ENCODE measurements at regions of chr2 and their contacts with region 1.

Region 1: DNA sequence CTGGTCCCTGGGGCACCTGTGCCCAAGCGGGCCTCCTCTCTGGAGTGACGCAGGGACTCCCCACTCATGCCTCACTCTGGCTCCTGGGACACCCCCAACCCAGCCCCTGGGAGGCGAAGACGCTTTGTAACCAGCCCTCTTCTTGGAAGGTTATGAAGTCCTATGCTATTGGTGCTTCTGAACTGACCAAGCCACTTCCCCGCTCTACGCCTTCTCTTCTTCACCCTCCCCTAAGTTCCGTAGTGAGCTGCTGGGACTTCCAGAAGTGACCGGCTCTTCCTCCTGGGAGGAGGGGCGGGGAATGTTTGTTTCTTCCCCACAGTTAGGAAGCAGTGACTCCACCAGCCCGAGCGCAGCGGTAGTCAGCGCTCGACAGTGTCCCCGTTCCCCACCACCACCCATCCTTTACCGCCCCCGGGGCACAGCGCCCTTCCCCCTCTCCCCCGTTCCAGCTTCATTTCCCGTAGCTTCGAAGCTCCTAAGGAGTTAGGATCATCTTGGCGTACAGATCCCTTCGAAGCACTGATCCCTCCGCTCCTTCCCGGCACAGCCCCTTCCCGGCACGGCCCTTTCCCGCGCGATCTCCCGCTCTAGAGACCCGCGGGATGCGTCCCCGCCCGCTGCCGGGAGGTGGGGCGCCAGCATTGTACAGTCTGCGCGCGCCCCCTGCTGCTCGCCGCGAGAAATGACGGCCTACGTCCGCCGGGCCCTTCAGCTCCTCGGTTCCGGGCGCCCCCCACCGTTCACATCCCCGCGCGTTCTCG is 25.3 kb upstream of the NOTO start:
- DNase-seq: peak; percentile 74 to 92 (median 88)
- ATAC-seq: peak; percentile 96
- H3K4me3 ChIP-seq: peak overlapping the region; percentile 67
- H3K4me3 Mint-ChIP-seq: peak overlapping the region; percentile 83 to 92 (median 90)
- H3K27ac ChIP-seq: no peak overlapping the region
- H3K27ac Mint-ChIP-seq: peak overlapping the region in 5 of 9 donors; percentile 28 to 88 (median 51)
- H3K4me1 ChIP-seq: peaks cover 15 to 20% of the 10 kb centered on the region in 2 donors
- H3K4me1 Mint-ChIP-seq: peaks cover 9 to 17% (median 12%) of the 10 kb centered on the region in 7 donors
- H3K27me3 ChIP-seq: peaks cover 0 to 3% of the 10 kb centered on the region in 2 donors
- H3K27me3 Mint-ChIP-seq: peaks cover 22 to 72% (median 29%) of the 10 kb centered on the region in 5 donors

Region 2: DNA sequence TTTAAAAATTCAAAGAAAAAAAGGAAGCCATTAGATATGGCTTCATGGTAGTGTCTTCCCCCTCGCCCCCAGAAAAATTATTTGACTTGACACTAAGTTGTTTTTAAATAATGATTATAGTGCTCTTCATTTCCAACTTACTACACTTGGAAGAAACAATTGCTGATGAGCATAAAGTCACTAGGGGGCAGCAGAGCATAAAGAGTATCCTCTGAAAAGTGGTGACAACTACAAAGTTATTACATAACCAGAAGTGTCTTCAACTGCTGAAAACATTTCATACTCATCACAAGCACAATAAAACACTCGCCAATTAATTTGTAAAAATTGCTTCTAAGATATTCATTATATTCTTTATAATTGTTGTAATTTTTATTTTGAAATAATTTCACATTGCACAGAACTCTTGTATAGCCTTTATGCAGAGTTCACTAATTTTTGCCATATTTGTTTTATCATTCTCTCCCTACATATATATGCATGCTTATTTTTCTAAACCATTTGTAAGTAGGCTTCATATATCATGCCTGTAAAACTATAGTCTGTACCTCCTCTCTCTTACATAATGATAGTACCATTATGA is 406.1 kb before region 1 on chr2:
- CTCF ChIA-PET with region 1: interaction called, 3 read pairs
- POLR2A ChIA-PET with region 1: no interaction called
- intact Hi-C with region 1: loop called (anchors 1 to 2 kb)
- DNase-seq: peak in 7 of 9 donors; percentile 46 to 75 (median 74)
- ATAC-seq: peak; percentile 84
- H3K4me3 ChIP-seq: no peak overlapping the region
- H3K4me3 Mint-ChIP-seq: peak overlapping the region in 1 of 10 donors; percentile 4
- H3K27ac ChIP-seq: no peak overlapping the region
- H3K27ac Mint-ChIP-seq: peak overlapping the region in 1 of 9 donors; percentile 41
- H3K4me1 ChIP-seq: no peaks in the 10 kb centered on the region
- H3K4me1 Mint-ChIP-seq: no peaks in the 10 kb centered on the region
- H3K27me3 ChIP-seq: no peaks in the 10 kb centered on the region
- H3K27me3 Mint-ChIP-seq: no peaks in the 10 kb centered on the region

Region 3: DNA sequence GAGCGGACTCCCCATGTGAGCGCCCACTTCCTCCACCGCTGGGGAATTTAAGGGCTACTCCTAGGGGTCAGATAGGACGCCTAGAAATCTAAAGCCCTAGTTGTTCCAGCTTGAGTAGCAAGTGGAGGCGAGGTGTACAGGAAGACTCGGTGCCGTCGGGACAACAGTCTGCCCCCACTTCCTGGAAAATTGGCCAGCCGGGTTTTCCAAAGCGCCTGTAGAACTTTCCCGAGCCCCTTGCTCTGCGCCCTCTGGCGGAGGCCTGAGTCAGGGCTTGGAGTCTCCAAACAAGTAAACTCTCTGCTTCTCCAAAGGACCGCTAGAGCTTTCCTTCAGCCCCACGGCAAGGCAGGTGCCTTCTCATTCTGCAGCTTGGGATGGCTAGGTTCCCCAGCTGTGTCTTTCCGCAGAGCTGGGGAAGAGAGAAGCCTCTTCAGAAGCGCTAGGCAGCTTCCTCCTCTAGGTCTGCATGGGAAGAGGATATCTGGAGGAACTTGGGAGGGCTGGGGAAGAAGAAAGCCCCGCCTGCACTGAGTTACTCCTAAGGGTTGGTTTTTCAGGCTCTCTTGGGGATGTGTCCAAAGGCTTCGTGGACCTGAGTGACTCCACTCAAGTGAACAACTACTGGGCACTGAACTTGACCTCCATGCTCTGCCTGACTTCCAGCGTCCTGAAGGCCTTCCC is 289.2 kb before region 1 on chr2:
- CTCF ChIA-PET with region 1: interaction called, 17 read pairs
- POLR2A ChIA-PET with region 1: no interaction called
- intact Hi-C with region 1: loop called (anchors 1 kb)
- DNase-seq: peak in 8 of 9 donors; percentile 10 to 63 (median 28)
- ATAC-seq: peak; percentile 68
- H3K4me3 ChIP-seq: peak overlapping the region; percentile 43
- H3K4me3 Mint-ChIP-seq: peak overlapping the region; percentile 71 to 86 (median 80)
- H3K27ac ChIP-seq: no peak overlapping the region
- H3K27ac Mint-ChIP-seq: no peak overlapping the region
- H3K4me1 ChIP-seq: peaks cover 0 to 7% of the 10 kb centered on the region in 2 donors
- H3K4me1 Mint-ChIP-seq: peaks cover 0 to 15% (median 9%) of the 10 kb centered on the region in 7 donors
- H3K27me3 ChIP-seq: peaks cover 0 to 6% of the 10 kb centered on the region in 2 donors
- H3K27me3 Mint-ChIP-seq: peaks cover 35 to 72% (median 70%) of the 10 kb centered on the region in 5 donors

Region 4: DNA sequence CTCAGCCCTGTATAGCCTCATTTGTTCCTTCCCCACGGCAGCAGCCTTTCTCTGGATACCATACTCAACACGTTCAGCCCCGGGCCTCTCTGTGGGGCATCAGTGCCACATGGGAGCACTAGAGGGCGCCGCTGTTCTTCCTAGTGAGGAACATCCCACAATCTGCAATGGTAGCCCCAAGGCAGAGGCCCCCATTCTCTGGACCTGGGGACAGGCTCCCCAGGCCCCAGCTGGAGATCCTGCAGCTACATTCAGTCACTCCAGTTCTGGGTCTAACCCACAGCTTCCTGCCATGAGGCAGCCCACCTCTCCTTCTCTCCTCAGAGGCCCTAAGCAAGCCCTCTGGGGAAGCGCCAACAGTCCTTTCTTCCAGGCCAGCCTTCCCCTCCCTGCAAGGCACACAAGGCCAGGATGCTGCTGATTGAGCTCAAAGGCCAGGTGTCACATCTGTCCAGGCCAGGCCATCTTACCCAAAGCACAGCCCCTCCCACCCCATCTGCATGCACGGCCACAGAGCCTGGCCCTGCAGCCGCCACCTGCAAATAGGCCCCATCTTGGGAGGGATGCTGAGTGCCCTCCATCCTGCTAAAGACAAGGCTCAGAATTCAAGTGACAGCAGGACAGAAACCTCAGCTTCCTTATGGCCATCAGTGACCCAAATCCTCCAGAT is 91.2 kb before region 1 on chr2:
- CTCF ChIA-PET with region 1: interaction called, 44 read pairs
- POLR2A ChIA-PET with region 1: interaction called, 3 read pairs
- intact Hi-C with region 1: loop called (anchors 1 kb)
- DNase-seq: peak; percentile 52 to 79 (median 71)
- ATAC-seq: peak; percentile 92
- H3K4me3 ChIP-seq: no peak overlapping the region
- H3K4me3 Mint-ChIP-seq: no peak overlapping the region
- H3K27ac ChIP-seq: no peak overlapping the region
- H3K27ac Mint-ChIP-seq: peak overlapping the region in 1 of 9 donors; percentile 13
- H3K4me1 ChIP-seq: no peaks in the 10 kb centered on the region
- H3K4me1 Mint-ChIP-seq: peaks cover 0 to 2% (median 0%) of the 10 kb centered on the region in 7 donors
- H3K27me3 ChIP-seq: no peaks in the 10 kb centered on the region
- H3K27me3 Mint-ChIP-seq: no peaks in the 10 kb centered on the region

Region 5: DNA sequence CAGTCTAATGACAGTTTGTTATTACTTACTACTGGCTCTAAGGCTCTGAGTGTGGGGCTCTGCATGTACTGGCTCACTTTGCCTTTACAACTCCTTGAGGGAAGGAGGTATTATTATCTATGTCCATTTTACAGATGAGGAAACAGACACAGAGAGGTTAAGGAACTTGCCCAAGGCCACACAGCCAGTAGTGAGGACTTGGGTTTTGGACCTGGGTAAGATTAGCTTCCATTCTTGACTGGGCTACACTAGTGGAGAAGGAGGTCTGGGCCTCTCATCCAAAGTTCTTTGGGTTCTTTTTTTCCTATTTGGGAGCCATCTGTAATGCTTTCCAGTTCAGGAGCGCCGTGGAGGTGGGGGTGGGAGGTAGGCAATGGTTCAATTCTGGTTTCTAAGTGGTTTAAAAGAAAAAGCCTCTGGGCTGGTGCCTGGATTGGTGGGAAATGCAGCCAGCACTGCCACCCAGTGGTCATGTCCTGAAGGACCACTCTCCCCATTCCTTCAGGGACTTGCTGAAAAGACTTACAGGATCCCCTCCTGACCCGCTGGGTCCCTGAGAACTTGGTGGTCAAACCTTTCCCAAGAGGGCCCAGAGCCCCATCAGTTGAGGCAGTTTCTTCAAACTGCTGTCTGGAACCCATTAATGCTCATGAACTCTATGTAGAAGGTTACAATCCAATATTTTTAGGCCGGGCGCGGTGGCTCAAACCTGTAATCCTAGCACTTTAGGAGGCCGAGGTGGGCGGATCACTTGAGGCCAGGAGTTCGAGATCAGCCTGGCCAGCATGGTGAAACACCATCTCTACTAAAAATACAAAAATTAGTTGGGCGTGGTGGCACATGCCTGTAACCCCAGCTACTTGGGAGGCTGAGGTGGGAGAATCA is 13.3 kb before region 1 on chr2:
- CTCF ChIA-PET with region 1: interaction called, 7 read pairs
- POLR2A ChIA-PET with region 1: interaction called, 4 read pairs
- intact Hi-C with region 1: loop called in 1 of 2 experiments (anchors 1 kb)
- DNase-seq: peak; percentile 31 to 66 (median 54)
- ATAC-seq: peak; percentile 88
- H3K4me3 ChIP-seq: no peak overlapping the region
- H3K4me3 Mint-ChIP-seq: no peak overlapping the region
- H3K27ac ChIP-seq: no peak overlapping the region
- H3K27ac Mint-ChIP-seq: no peak overlapping the region
- H3K4me1 ChIP-seq: no peaks in the 10 kb centered on the region
- H3K4me1 Mint-ChIP-seq: peaks cover 0 to 1% (median 0%) of the 10 kb centered on the region in 7 donors
- H3K27me3 ChIP-seq: no peaks in the 10 kb centered on the region
- H3K27me3 Mint-ChIP-seq: peaks cover 0 to 16% (median 11%) of the 10 kb centered on the region in 5 donors

Region 6: GRCh38 chr2:73293534-73294171 is 116.6 kb after region 1 on chr2 and contains the start of gene EGR4:
- CTCF ChIA-PET with region 1: no interaction called
- POLR2A ChIA-PET with region 1: no interaction called
- intact Hi-C with region 1: loop called in 1 of 2 experiments (anchors 2 kb)
- DNase-seq: peak; percentile 70 to 96 (median 88)
- ATAC-seq: peak; percentile 94
- H3K4me3 ChIP-seq: peak within 1 kb of the TSS; percentile 72
- H3K4me3 Mint-ChIP-seq: peak within 1 kb of the TSS; percentile 59 to 82 (median 72)
- H3K27ac ChIP-seq: no peak within 1 kb of the TSS
- H3K27ac Mint-ChIP-seq: peak within 1 kb of the TSS in 4 of 9 donors; percentile 9 to 81 (median 30)
- H3K4me1 ChIP-seq: peaks cover 17 to 18% of the 10 kb centered on the region in 2 donors
- H3K4me1 Mint-ChIP-seq: peaks cover 7 to 25% (median 14%) of the 10 kb centered on the region in 7 donors
- H3K27me3 ChIP-seq: peaks cover 11 to 25% of the 10 kb centered on the region in 2 donors
- H3K27me3 Mint-ChIP-seq: peaks cover 48 to 83% (median 66%) of the 10 kb centered on the region in 5 donors
- total RNA-seq, gene EGR4: 0.15 to 0.16 (median 0.15) TPM in 3 of 5 experiments, not detected in the others

Measured in naive thymus-derived CD4-positive, alpha-beta T cell (primary cell).